Activated T-helper 1 cell treated with anti-CD3 and anti-CD28 coated beads, Interleukin-12 subunit alpha, Interleukin-12 subunit beta, Interleukin-2, Interleukin-4 antibody, amounts not matched to agents 30 ng/mL and 10 ng/mL and 1 ng/mL, durations not matched to agents 14 hours and 24 hours and 36 hours (primary cell): ENCODE measurements at regions of chr2 and their contacts with region 1.

Region 1: GRCh38 chr2:241686649-241687425 is at the start of gene DTYMK:
- DNase-seq: peak; percentile 97
- H3K4me3 Mint-ChIP-seq: peak within 1 kb of the TSS; percentile 96
- H3K27ac Mint-ChIP-seq: peak within 1 kb of the TSS; percentile 98
- H3K4me1 Mint-ChIP-seq: peaks cover 28% of the 10 kb centered on the region
- H3K27me3 Mint-ChIP-seq: no peaks in the 10 kb centered on the region
- total RNA-seq, gene DTYMK: 102 and 106 TPM in 2 replicates

Region 2: DNA sequence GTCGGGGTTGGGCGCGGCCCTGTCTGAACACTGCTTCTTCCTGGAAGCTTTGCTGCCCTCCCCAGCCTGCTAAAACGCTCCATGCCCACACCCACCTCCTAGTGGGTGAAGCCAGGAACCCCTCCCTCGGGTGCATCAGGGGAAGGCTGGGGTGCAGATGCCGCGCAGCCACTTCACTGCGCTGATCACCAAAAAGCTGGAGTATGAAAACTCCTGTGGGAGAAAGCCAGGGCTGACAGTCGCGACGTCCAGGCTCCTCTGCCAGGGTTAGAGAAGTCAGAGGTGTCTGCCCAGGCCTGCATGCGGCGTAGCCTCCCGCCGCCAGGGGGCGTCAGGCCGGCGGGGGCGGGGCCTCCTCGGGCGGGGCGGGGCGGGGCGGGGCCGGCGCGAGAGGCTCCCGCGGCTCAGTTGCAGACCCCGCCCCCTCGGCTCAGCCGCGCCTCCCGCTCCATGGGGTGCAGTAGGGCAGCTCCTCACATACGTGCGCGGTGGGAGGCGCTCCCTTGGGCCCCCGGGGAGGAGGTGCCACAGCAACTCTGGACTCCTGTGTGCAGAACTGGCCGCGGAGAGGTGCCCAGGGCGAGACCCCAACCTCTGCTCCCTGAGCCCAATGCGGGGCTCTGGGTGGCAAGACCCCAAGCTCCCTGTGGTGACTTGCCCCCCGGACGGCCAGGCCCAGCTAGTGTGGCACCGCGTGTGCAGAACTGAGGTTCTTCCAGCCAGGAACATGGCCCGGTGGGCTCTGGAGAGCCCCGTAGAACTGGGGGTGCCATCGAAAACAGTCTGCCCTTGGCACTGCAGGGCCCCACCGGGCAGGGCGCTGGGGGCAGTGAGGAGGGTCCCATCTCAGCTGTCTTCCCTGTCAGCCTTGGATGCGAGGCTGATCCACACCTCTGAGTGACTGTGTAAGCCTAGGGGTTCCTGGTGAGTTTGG is 1120.4 kb before region 1 on chr2:
- intact Hi-C with region 1: loop called (anchors 5 kb)
- DNase-seq: peak; percentile 93
- H3K4me3 Mint-ChIP-seq: peak overlapping the region; percentile 93
- H3K27ac Mint-ChIP-seq: peak overlapping the region; percentile 99
- H3K4me1 Mint-ChIP-seq: peaks cover 83% of the 10 kb centered on the region
- H3K27me3 Mint-ChIP-seq: no peaks in the 10 kb centered on the region

Region 3: GRCh38 chr2:241617431-241618154 is 69.2 kb before region 1 on chr2:
- intact Hi-C with region 1: loop called (anchors 2 kb)
- DNase-seq: peak; percentile 31
- H3K4me3 Mint-ChIP-seq: peak overlapping the region; percentile 85
- H3K27ac Mint-ChIP-seq: peak overlapping the region; percentile 88
- H3K4me1 Mint-ChIP-seq: peaks cover 36% of the 10 kb centered on the region
- H3K27me3 Mint-ChIP-seq: no peaks in the 10 kb centered on the region

Region 4: GRCh38 chr2:241702132-241703031 is 15.5 kb after region 1 on chr2:
- intact Hi-C with region 1: loop called (anchors 1 kb)
- DNase-seq: peak; percentile 82
- H3K4me3 Mint-ChIP-seq: peak overlapping the region; percentile 78
- H3K27ac Mint-ChIP-seq: peak overlapping the region; percentile 53
- H3K4me1 Mint-ChIP-seq: peaks cover 20% of the 10 kb centered on the region
- H3K27me3 Mint-ChIP-seq: no peaks in the 10 kb centered on the region

Region 5: DNA sequence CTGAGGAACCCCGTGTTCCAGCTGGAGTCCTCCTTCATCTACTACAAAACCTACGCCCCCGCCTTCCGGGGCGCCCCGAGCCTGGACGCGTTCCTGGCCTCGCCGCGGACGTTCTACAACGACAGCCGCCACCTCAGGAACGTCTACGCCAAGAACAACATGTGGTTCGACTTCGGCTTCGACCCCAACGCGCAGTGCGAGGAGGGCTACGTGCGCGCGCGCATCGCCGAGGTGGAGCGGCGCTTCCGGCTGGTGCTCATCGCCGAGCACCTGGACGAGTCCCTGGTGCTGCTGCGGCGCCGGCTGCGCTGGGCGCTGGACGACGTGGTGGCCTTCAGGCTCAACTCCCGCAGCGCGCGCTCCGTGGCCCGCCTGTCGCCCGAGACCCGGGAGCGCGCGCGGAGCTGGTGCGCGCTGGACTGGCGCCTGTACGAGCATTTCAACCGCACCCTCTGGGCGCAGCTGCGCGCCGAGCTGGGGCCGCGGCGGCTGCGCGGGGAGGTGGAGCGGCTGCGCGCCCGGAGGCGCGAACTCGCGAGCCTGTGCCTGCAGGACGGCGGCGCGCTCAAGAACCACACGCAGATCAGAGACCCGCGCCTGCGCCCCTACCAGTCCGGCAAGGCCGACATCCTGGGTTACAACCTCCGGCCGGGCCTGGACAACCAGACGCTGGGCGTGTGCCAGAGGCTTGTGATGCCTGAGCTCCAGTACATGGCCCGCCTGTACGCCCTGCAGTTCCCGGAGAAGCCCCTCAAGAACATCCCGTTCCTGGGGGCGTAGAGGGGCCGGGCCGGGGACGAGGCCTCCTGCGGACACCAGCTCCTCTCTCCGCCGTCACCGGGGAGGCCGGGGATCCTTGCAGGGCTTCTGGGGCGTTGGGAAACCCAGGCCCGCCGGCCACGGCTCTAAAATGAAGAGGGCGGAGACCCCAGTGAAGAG is 116.8 kb after region 1 on chr2:
- intact Hi-C with region 1: no loop called
- DNase-seq: peak; percentile 33
- H3K4me3 Mint-ChIP-seq: peak overlapping the region; percentile 56
- H3K27ac Mint-ChIP-seq: peak overlapping the region; percentile 29
- H3K4me1 Mint-ChIP-seq: peaks cover 4% of the 10 kb centered on the region
- H3K27me3 Mint-ChIP-seq: peaks cover 9% of the 10 kb centered on the region

Region 6: GRCh38 chr2:241859436-241860183 is 172.8 kb after region 1 on chr2:
- intact Hi-C with region 1: loop called (anchors 5 kb)
- DNase-seq: peak; percentile 33
- H3K4me3 Mint-ChIP-seq: peak overlapping the region; percentile 88
- H3K27ac Mint-ChIP-seq: peak overlapping the region; percentile 99
- H3K4me1 Mint-ChIP-seq: peaks cover 57% of the 10 kb centered on the region
- H3K27me3 Mint-ChIP-seq: peaks cover under 1% of the 10 kb centered on the region